ENCODE measurements at regions of chr22 and their contacts with region 1.

Region 1: DNA sequence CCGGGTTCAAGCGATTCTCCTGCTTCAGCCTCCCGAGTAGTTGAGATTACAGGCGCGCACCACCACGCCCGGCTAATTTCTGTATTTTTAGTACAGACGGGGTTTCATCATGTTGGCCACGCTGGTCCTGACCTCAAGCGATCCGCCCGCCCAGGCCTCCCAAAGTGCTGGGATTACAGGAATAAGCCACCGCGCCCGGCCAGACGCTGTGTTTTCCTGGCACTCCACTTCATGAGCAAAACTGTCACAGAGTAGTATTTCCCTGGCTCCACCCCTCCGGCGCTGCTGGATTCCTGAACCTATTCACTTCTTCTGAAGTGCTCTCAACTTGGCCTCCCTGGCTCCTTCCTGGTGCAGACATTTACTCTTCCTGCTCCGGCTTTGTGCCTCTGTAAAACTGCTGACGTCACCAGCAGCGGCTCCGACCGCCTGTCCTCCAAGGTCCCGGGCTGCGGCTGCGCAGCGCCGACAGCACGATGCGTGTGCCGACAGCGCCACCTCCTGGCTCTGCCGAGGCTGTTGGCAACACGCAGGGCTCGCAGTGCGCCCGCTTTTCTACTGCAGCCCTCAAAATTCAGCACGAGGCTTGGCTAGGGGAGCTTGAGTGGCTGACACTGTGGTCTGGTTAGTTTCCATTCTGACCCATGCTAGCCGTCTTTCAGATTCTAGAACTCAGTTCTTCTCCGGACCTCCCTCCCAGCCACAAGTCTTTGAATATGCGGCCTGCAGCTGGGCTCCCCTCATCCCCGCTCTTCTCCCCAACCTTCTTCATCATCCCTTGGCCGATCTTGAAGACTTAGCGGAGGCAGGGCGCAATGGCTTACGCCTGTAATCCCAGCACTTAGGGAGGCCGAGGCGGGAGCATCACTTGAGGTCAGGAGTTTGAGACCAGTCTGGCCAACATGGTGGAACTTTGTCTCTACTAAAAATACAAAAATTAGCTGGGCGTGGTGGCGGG is 36.6 kb downstream of the APOL3 start:
- DNase-seq: peak; percentile 85
- ATAC-seq: peak; percentile 100
- H3K4me3 Mint-ChIP-seq: peak overlapping the region; percentile 81
- H3K27ac Mint-ChIP-seq: peak overlapping the region; percentile 68
- H3K4me1 Mint-ChIP-seq: peaks cover 8% of the 10 kb centered on the region
- H3K27me3 Mint-ChIP-seq: peaks cover 8% of the 10 kb centered on the region
- CTCF ChIP-seq: peak; percentile 59

Region 2: DNA sequence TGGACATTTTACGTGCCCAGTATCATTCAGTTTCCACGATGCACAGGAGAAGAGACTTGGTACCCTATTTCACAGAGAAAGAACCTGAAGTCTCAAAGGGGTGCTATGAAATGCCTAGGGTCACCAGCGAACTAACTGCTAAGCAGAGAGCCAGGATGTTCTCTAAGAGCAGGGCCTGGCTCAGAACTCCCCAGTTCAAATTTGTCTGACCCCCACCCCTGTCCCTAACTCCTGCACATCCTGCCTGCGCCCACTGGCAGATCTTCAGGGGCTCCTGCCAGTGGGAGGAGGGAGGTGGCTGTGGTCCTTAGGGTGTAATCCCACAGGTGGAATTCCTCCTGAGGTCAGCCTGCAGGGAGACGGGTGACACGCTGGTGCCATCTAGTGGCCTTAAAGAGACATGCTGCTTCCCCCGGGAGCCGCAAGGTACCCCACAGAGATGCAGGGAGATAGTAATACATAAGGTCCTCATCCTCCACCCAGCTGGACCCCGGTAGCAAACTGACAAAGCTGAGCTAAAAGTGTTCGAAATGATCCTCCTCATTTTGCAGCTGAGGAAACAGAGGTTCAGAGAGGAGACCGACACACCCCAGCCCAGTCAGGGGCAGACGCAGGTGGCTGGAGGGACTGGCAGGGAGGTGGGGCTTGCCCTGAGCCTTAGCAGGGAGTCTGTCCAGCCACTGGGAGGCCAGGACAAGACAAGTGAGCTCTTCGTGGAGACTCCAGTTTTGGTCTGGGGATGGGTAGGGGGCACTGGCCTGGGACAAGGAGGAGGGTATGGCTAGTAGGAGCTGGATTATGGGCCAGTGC is 540.9 kb before region 1 on chr22:
- CTCF ChIA-PET with region 1: no interaction called
- POLR2A ChIA-PET with region 1: no interaction called
- intact Hi-C with region 1: loop called (anchors 1 kb)
- DNase-seq: peak; percentile 47
- ATAC-seq: peak; percentile 86
- H3K4me3 Mint-ChIP-seq: no peak overlapping the region
- H3K27ac Mint-ChIP-seq: no peak overlapping the region
- H3K4me1 Mint-ChIP-seq: peaks cover 4% of the 10 kb centered on the region
- H3K27me3 Mint-ChIP-seq: no peaks in the 10 kb centered on the region
- CTCF ChIP-seq: peak; percentile 45

Region 3: GRCh38 chr22:35627264-35628041 is 496.5 kb before region 1 on chr22:
- CTCF ChIA-PET with region 1: no interaction called
- POLR2A ChIA-PET with region 1: no interaction called
- intact Hi-C with region 1: loop called (anchors 2 kb)
- DNase-seq: no peak
- ATAC-seq: no peak
- H3K4me3 Mint-ChIP-seq: no peak overlapping the region
- H3K27ac Mint-ChIP-seq: no peak overlapping the region
- H3K4me1 Mint-ChIP-seq: peaks cover 19% of the 10 kb centered on the region
- H3K27me3 Mint-ChIP-seq: peaks cover 43% of the 10 kb centered on the region
- CTCF ChIP-seq: no peak

Region 4: DNA sequence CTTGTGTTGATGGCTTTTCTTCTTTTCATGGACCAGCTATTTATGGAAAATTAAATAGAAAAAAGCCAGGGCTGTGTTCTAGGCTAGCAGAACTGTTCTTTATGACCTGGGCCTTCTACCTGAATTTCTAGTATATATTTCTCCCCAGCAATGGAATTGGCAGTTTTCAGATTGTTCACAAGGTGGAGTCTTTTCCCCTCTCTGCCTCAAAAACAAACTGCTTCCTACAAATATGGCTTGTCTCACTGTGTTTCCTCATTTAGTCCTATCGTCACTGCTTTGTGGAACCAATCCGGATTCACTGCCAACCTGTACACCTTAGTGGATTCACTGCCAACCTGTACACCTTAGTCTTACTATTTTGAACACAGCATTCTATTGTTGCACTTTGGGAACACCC is 411.3 kb before region 1 on chr22:
- CTCF ChIA-PET with region 1: no interaction called
- POLR2A ChIA-PET with region 1: no interaction called
- intact Hi-C with region 1: loop called (anchors 10 kb)
- DNase-seq: no peak
- ATAC-seq: no peak
- H3K4me3 Mint-ChIP-seq: no peak overlapping the region
- H3K27ac Mint-ChIP-seq: no peak overlapping the region
- H3K4me1 Mint-ChIP-seq: no peaks in the 10 kb centered on the region
- H3K27me3 Mint-ChIP-seq: peaks cover 22% of the 10 kb centered on the region
- CTCF ChIP-seq: no peak

Region 5: DNA sequence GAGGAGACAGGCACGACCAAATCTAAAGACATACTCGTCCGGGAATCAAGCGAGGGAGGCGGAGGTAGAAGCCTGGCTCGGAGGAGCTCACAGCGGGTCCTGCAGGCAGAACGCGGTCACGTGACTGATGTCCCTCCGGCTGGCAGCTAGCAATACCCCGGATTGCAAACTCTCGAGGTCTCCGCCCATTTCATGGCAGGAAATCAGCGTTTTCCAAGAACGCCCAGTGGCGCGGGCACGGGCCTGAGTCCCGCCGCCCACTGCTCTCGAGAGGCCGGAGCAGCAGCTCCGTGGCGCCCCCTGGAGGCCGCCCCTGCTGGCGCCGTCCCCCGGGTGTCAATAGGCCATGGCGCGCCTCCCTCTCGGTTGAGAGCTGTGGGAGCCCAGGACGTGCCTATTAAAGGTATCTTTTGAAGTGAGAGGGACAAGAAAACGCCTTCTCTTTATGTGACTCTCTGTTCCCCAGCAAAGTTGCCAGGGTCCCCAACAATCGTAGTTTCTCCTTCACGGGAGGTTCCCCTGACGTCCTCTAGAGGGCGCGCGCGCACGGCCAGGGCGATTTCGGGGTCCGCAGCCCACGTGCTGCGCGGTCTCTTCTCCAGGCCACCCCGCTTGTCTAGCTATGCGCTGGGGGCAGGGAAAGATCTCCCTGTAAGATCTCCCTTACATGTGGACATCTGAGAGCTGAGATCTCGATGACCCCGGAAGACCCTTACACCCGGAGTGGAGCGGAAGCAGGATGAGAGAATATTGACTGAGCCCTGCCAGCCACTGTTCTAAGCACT is 58.0 kb before region 1 on chr22:
- CTCF ChIA-PET with region 1: interaction called, 3 read pairs
- POLR2A ChIA-PET with region 1: no interaction called
- intact Hi-C with region 1: loop called (anchors 2 kb)
- DNase-seq: peak; percentile 47
- ATAC-seq: peak; percentile 47
- H3K4me3 Mint-ChIP-seq: peak overlapping the region; percentile 70
- H3K27ac Mint-ChIP-seq: no peak overlapping the region
- H3K4me1 Mint-ChIP-seq: peaks cover 11% of the 10 kb centered on the region
- H3K27me3 Mint-ChIP-seq: peaks cover 27% of the 10 kb centered on the region
- CTCF ChIP-seq: peak; percentile 76

Measured in activated B cell treated with CpG ODN at 0.5 μM for 24 hours (primary cell).